ENCODE measurements at regions of chr2 and their contacts with region 1.

Region 1: DNA sequence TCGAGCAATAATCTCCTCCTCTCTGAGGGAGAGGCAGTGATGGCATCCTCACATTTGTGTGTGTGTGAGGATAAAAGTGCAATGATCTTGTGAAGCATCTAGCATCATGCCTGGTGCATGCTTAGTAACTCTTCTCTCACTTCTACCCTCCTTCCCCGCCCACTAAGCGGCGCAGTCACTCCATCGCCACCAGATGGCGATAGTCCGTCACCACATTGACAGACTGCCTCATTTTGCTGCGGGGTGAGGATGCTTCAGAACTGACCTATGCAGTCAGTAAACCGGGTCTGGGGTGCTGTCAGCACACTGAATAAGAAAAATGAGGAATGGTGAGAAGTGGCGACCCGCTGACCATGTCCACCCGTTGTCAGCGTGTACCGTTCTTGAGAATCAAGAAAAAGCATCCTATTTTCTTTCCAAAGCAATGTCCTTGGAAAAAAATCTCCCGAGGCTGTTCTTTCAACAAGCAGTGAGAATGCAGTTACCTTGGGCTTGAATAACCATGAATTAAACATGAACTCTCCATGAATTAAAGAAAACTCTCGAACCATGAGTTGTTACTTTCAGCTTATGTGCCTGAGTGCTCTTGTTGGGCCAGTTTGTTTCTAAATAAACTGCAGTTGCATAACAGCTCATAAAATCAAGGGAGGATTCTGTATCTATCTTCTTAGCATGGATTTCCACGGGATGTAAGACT is 37.3 kb upstream of the TMEM177 start:
- DNase-seq: peak; percentile 49 to 82 (median 69)
- ATAC-seq: peak; percentile 92
- H3K4me3 ChIP-seq: no peak overlapping the region
- H3K4me3 Mint-ChIP-seq: no peak overlapping the region
- H3K27ac ChIP-seq: no peak overlapping the region
- H3K27ac Mint-ChIP-seq: no peak overlapping the region
- H3K4me1 ChIP-seq: no peaks in the 10 kb centered on the region
- H3K4me1 Mint-ChIP-seq: peaks cover 2% of the 10 kb centered on the region
- H3K27me3 ChIP-seq: no peaks in the 10 kb centered on the region
- H3K27me3 Mint-ChIP-seq: peaks cover 10% of the 10 kb centered on the region
- CTCF ChIP-seq: peak; percentile 95

Region 2: GRCh38 chr2:119659601-119660342 is 18.1 kb after region 1 on chr2:
- CTCF ChIA-PET with region 1: interaction called, 39 read pairs
- POLR2A ChIA-PET with region 1: no interaction called
- intact Hi-C with region 1: loop called (anchors 1 to 2 kb)
- DNase-seq: peak in 4 of 9 experiments; percentile 37 to 60 (median 45)
- ATAC-seq: no peak
- H3K4me3 ChIP-seq: no peak overlapping the region
- H3K4me3 Mint-ChIP-seq: no peak overlapping the region
- H3K27ac ChIP-seq: no peak overlapping the region
- H3K27ac Mint-ChIP-seq: no peak overlapping the region
- H3K4me1 ChIP-seq: no peaks in the 10 kb centered on the region
- H3K4me1 Mint-ChIP-seq: peaks cover 2% of the 10 kb centered on the region
- H3K27me3 ChIP-seq: no peaks in the 10 kb centered on the region
- H3K27me3 Mint-ChIP-seq: peaks cover 7% of the 10 kb centered on the region
- CTCF ChIP-seq: peak; percentile 76

Region 3: GRCh38 chr2:119694845-119695521 is 53.3 kb after region 1 on chr2:
- CTCF ChIA-PET with region 1: interaction called, 3 read pairs
- POLR2A ChIA-PET with region 1: no interaction called
- intact Hi-C with region 1: loop called in 1 of 2 experiments (anchors 2 kb)
- DNase-seq: peak in 5 of 9 experiments; percentile 20 to 62 (median 31)
- ATAC-seq: peak; percentile 65
- H3K4me3 ChIP-seq: peak overlapping the region; percentile 5 to 9
- H3K4me3 Mint-ChIP-seq: peak overlapping the region; percentile 81
- H3K27ac ChIP-seq: no peak overlapping the region
- H3K27ac Mint-ChIP-seq: peak overlapping the region; percentile 76
- H3K4me1 ChIP-seq: peaks cover 48% of the 10 kb centered on the region
- H3K4me1 Mint-ChIP-seq: peaks cover 47% of the 10 kb centered on the region
- H3K27me3 ChIP-seq: no peaks in the 10 kb centered on the region
- H3K27me3 Mint-ChIP-seq: peaks cover 4% of the 10 kb centered on the region
- CTCF ChIP-seq: no peak

Region 4: DNA sequence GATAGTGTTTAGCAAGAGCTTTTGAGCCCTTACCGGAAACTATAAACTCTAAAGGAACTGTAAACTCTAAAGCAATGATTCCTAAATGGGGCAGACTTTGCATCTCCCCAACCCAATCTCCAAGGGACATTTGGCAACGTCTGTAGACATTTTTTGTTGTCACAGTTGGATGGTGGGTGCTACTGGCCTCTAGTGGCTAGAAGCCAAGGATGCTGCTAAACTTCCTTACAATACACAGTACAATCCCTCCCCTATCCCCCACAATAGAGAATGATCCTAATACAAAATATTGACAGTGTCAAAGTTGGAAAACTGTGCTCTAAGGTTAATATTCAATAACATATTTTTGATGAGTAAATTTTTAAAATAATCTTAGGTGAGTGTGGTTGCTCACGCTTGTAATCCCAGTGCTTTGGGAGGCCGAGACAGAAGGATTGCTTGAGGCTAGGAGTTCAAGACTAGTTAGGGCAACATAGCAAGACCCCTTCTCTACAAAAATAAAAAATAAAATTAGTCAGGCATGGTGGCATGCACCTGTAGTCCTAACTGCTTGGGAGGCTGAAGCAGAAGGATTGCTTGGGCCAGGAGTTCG is 184.8 kb after region 1 on chr2:
- CTCF ChIA-PET with region 1: interaction called, 4 read pairs
- POLR2A ChIA-PET with region 1: no interaction called
- intact Hi-C with region 1: loop called (anchors 1 to 2 kb)
- DNase-seq: peak in 5 of 9 experiments; percentile 39 to 71 (median 48)
- ATAC-seq: peak; percentile 72
- H3K4me3 ChIP-seq: no peak overlapping the region
- H3K4me3 Mint-ChIP-seq: no peak overlapping the region
- H3K27ac ChIP-seq: no peak overlapping the region
- H3K27ac Mint-ChIP-seq: no peak overlapping the region
- H3K4me1 ChIP-seq: peaks cover 6% of the 10 kb centered on the region
- H3K4me1 Mint-ChIP-seq: peaks cover 56% of the 10 kb centered on the region
- H3K27me3 ChIP-seq: no peaks in the 10 kb centered on the region
- H3K27me3 Mint-ChIP-seq: no peaks in the 10 kb centered on the region
- CTCF ChIP-seq: peak; percentile 73